HEK293T (cell line): ENCODE measurements at regions of chr12 and their contacts with region 1.

Region 1: DNA sequence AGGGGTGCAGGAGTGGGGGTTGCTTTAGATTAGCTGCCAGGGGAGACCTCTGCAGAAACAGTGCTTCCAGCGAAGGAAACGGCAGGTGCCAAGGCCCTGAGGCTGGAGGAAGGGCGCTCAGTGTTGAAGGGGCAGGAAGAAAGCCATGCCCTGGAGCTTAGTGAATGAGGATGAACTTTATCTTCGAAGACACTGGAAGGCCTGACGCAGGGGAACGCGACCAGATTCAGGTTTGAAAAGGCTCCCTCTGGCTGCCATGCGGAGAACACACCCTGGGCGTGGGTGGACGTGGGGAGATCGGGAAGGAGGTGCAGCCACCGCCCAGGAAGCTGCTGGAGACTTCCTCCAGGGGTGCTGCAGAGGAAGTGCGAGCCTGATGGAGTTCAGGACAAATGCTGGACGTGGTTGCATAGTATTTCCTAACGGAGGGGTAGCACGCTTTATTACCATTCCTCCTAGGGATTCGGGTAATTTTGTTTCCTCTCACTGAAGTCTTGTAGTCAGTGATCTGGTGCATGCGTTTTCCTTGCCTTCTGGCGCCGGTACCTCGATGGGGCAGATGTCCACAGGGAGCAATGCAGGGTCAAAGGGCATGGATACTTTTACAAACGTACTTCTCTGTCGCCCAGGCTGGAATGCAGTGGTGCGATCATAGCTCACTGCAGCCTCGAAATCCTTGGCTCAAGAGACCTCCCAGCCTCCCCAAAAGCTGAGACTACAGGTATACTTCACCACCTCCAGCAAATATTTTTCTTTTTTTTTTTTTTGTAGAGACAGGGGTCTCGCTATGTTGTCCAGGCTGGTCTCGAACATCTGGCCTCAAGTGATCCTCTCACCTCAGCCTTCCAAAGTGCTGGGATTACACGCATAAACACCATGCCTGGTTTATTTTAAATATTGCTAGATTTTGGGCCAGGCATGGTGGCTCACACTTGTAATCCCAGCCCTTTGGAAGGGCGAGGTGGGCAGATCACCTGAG is 26.4 kb upstream of the UBC start:
- DNase-seq: peak; percentile 67

Region 2: DNA sequence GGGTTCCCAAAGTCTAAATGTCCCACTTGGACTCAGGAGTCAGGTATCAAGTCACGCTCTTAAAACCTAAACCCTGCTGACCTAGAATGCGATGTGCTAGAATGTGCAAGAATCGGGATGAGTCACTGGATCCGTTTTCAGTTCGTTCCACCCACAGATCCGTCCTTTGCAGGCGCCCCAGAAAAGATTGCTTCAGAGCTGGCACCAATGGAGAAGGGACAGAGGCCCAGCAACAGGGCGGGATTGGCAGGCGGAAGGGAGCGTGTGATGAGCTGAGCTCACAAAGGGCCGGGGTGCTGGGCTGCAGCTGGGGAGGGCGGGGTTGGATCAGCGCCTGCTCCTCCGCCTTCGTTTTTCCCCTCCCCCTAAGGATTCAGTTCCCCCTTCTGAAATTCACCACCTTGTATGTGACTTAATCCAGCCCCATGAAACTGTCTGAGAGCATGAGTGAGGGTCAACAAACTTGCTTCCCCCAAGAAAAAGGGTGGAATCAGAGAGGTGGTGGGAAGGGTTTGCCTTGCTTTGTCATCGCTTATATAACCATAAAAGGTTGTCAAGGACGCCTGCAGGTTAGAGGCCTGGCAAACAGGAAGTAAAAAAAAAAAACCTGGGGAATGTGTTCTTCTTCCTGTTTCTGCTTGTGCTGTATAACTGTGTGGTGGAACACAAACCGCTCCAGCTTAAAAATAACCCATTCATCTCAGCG is 23.6 kb before region 1 on chr12:
- CTCF ChIA-PET with region 1: interaction called, 18 read pairs
- POLR2A ChIA-PET with region 1: interaction called, 60 read pairs
- DNase-seq: peak; percentile 80

Region 3: GRCh38 chr12:124961726-124962125 is 20.9 kb after region 1 on chr12:
- CTCF ChIA-PET with region 1: no interaction called
- POLR2A ChIA-PET with region 1: no interaction called
- DNase-seq: no peak